ENCODE measurements at regions of chr7 and their contacts with region 1.

Region 1: DNA sequence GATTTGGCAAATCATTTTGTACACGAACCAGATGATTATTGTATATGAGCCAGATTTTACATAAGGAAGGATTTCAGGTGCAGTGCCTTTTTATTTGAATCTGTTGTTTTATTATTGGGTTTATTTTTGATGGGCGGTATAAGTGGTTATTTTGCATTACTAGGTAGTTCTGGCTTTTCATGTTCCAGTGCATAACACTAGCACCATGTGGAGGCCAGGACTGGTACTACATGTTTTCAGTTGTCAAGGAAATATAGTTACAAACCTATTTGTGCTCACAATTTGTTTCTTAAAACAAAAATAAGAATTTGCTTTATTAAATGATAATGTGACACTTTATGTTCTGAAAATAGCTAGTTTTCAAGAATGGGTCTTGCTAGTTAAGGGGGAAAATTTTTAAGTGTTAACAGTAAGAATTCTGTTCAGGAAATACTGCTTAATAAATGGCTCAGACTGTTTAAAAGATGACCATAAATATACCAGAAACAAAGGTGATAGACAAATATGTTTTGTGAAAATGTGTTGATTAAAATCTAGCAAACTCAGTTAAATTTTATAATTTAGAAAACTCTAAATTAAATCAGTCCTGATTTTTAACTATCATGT is 7.1 kb upstream of the SEMA3E start:
- DNase-seq: no peak
- H3K4me3 ChIP-seq: no peak overlapping the region
- H3K27ac ChIP-seq: no peak overlapping the region
- H3K4me1 ChIP-seq: no peaks in the 10 kb centered on the region
- H3K27me3 ChIP-seq: no peaks in the 10 kb centered on the region
- CTCF ChIP-seq: peak in 2 of 3 experiments; percentile 31 to 53
- POLR2A ChIP-seq: no peak

Region 2: GRCh38 chr7:83677180-83677866 is 21.3 kb after region 1 on chr7:
- intact Hi-C with region 1: loop called (anchors 1 kb)
- DNase-seq: no peak
- H3K4me3 ChIP-seq: no peak overlapping the region
- H3K27ac ChIP-seq: no peak overlapping the region
- H3K4me1 ChIP-seq: peaks cover 14% of the 10 kb centered on the region
- H3K27me3 ChIP-seq: no peaks in the 10 kb centered on the region
- CTCF ChIP-seq: no peak
- POLR2A ChIP-seq: no peak

Measured in vagina (tissue), 2 donors.